CD4-positive, alpha-beta memory T cell (primary cell): ENCODE measurements at regions of chr1 and their contacts with region 1.

Region 1: GRCh38 chr1:161726596-161727457 is 5.5 kb downstream of the FCRLB start:
- DNase-seq: peak; percentile 66 to 77 (median 68)
- H3K4me3 ChIP-seq: peak overlapping the region; percentile 79 to 85
- H3K4me3 Mint-ChIP-seq: peak overlapping the region; percentile 92 to 100 (median 96)
- H3K27ac ChIP-seq: peak overlapping the region; percentile 61
- H3K27ac Mint-ChIP-seq: peak overlapping the region; percentile 34 to 97 (median 90)
- H3K4me1 ChIP-seq: peaks cover 38% of the 10 kb centered on the region
- H3K4me1 Mint-ChIP-seq: peaks cover 24 to 53% (median 39%) of the 10 kb centered on the region in 4 donors
- H3K27me3 ChIP-seq: no peaks in the 10 kb centered on the region
- H3K27me3 Mint-ChIP-seq: no peaks in the 10 kb centered on the region

Region 2: GRCh38 chr1:161531986-161532643 is 194.7 kb before region 1 on chr1:
- CTCF ChIA-PET with region 1: interaction called, 6 read pairs
- POLR2A ChIA-PET with region 1: interaction called, 29 read pairs
- intact Hi-C with region 1: no loop called
- DNase-seq: no peak
- H3K4me3 ChIP-seq: no peak overlapping the region
- H3K4me3 Mint-ChIP-seq: peak overlapping the region in 4 of 8 donors; percentile 51 to 58 (median 54)
- H3K27ac ChIP-seq: no peak overlapping the region
- H3K27ac Mint-ChIP-seq: peak overlapping the region in 1 of 7 donors; percentile 78
- H3K4me1 ChIP-seq: peaks cover 10% of the 10 kb centered on the region
- H3K4me1 Mint-ChIP-seq: peaks cover 2 to 25% (median 9%) of the 10 kb centered on the region in 4 donors
- H3K27me3 ChIP-seq: no peaks in the 10 kb centered on the region
- H3K27me3 Mint-ChIP-seq: peaks cover 0 to 15% of the 10 kb centered on the region in 2 donors

Region 3: GRCh38 chr1:161549652-161550051 is 177.2 kb before region 1 on chr1 and contains the start of gene FCGR3A:
- CTCF ChIA-PET with region 1: no interaction called
- POLR2A ChIA-PET with region 1: interaction called, 4 read pairs
- intact Hi-C with region 1: loop called (anchors 5 kb)
- DNase-seq: no peak
- H3K4me3 ChIP-seq: no peak within 1 kb of the TSS
- H3K4me3 Mint-ChIP-seq: no peak within 1 kb of the TSS
- H3K27ac ChIP-seq: no peak within 1 kb of the TSS
- H3K27ac Mint-ChIP-seq: no peak within 1 kb of the TSS
- H3K4me1 ChIP-seq: peaks cover 8% of the 10 kb centered on the region
- H3K4me1 Mint-ChIP-seq: peaks cover 5 to 21% (median 12%) of the 10 kb centered on the region in 4 donors
- H3K27me3 ChIP-seq: no peaks in the 10 kb centered on the region
- H3K27me3 Mint-ChIP-seq: no peaks in the 10 kb centered on the region
- total RNA-seq, gene FCGR3A: 0.81 to 2.1 TPM

Region 4: GRCh38 chr1:161681879-161682278 is 44.9 kb before region 1 on chr1:
- CTCF ChIA-PET with region 1: no interaction called
- POLR2A ChIA-PET with region 1: no interaction called
- intact Hi-C with region 1: no loop called
- DNase-seq: no peak
- H3K4me3 ChIP-seq: no peak overlapping the region
- H3K4me3 Mint-ChIP-seq: no peak overlapping the region
- H3K27ac ChIP-seq: no peak overlapping the region
- H3K27ac Mint-ChIP-seq: no peak overlapping the region
- H3K4me1 ChIP-seq: no peaks in the 10 kb centered on the region
- H3K4me1 Mint-ChIP-seq: no peaks in the 10 kb centered on the region
- H3K27me3 ChIP-seq: no peaks in the 10 kb centered on the region
- H3K27me3 Mint-ChIP-seq: peaks cover 4 to 6% of the 10 kb centered on the region in 2 donors

Region 5: DNA sequence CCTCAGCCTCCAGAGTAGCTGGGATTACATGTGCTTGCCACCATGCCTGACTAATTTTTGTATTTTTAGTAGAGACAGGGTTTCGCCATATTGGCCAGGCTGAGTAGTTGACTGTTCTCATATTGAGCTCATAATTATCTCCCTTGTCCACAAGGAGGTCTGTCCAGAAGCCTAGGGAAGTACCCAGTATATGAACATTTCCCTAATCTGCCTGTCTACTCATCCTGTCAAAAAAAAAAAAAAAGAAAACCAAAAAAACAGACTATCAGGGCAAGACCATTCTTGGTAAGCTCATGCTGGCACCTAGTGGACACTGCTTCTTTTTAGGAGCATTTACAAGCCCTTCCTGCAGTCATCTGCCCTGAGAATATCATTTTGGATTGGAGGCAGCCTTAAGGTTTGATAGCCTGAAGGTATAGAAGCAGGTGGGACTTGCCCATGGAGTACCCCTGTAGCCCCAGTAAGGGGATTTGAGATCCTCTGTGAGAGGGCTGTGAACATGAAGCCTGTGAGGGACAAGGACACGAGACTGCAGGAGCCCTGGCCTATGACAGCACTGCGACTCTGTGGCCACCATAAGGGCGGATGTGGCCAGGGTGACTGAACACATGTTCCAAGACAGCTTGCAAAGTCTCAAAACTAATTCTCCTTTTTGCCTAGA is 11.9 kb after region 1 on chr1:
- CTCF ChIA-PET with region 1: interaction called, 103 read pairs
- POLR2A ChIA-PET with region 1: interaction called, 104 read pairs
- intact Hi-C with region 1: loop called (anchors 1 kb)
- DNase-seq: peak; percentile 49 to 66 (median 55)
- H3K4me3 ChIP-seq: no peak overlapping the region
- H3K4me3 Mint-ChIP-seq: peak overlapping the region in 4 of 8 donors; percentile 11 to 61 (median 36)
- H3K27ac ChIP-seq: no peak overlapping the region
- H3K27ac Mint-ChIP-seq: peak overlapping the region; percentile 25 to 65 (median 37)
- H3K4me1 ChIP-seq: peaks cover 22% of the 10 kb centered on the region
- H3K4me1 Mint-ChIP-seq: peaks cover 3 to 30% (median 22%) of the 10 kb centered on the region in 4 donors
- H3K27me3 ChIP-seq: no peaks in the 10 kb centered on the region
- H3K27me3 Mint-ChIP-seq: no peaks in the 10 kb centered on the region

Region 6: GRCh38 chr1:161749509-161750407 is 22.9 kb after region 1 on chr1 and contains the start of gene DUSP12:
- CTCF ChIA-PET with region 1: interaction called, 7 read pairs
- POLR2A ChIA-PET with region 1: interaction called, 67 read pairs
- intact Hi-C with region 1: no loop called
- DNase-seq: peak; percentile 84 to 90 (median 86)
- H3K4me3 ChIP-seq: peak within 1 kb of the TSS; percentile 91 to 96
- H3K4me3 Mint-ChIP-seq: peak within 1 kb of the TSS; percentile 99 to 100 (median 99)
- H3K27ac ChIP-seq: peak within 1 kb of the TSS; percentile 75
- H3K27ac Mint-ChIP-seq: peak within 1 kb of the TSS; percentile 95 to 98 (median 96)
- H3K4me1 ChIP-seq: peaks cover 19% of the 10 kb centered on the region
- H3K4me1 Mint-ChIP-seq: peaks cover 18 to 35% (median 27%) of the 10 kb centered on the region in 4 donors
- H3K27me3 ChIP-seq: no peaks in the 10 kb centered on the region
- H3K27me3 Mint-ChIP-seq: peaks cover 1 to 6% of the 10 kb centered on the region in 2 donors
- total RNA-seq, gene DUSP12: 30.4 to 31.6 TPM

Region 7: GRCh38 chr1:162248854-162249535 is 522.2 kb after region 1 on chr1:
- CTCF ChIA-PET with region 1: no interaction called
- POLR2A ChIA-PET with region 1: no interaction called
- intact Hi-C with region 1: no loop called
- DNase-seq: no peak
- H3K4me3 ChIP-seq: no peak overlapping the region
- H3K4me3 Mint-ChIP-seq: no peak overlapping the region
- H3K27ac ChIP-seq: no peak overlapping the region
- H3K27ac Mint-ChIP-seq: no peak overlapping the region
- H3K4me1 ChIP-seq: no peaks in the 10 kb centered on the region
- H3K4me1 Mint-ChIP-seq: no peaks in the 10 kb centered on the region
- H3K27me3 ChIP-seq: no peaks in the 10 kb centered on the region
- H3K27me3 Mint-ChIP-seq: peaks cover 4 to 7% of the 10 kb centered on the region in 2 donors